Activated T-helper 2 cell treated with anti-CD3 and anti-CD28 coated beads, Interferon-gamma antibody, Interleukin-2, Interleukin-4, amounts not matched to agents 10 μg/mL and 5 μg/mL and 100 μg/mL, durations not matched to agents 14 hours and 24 hours and 36 hours (primary cell): ENCODE measurements at regions of chr13 and their contacts with region 1.

Region 1: DNA sequence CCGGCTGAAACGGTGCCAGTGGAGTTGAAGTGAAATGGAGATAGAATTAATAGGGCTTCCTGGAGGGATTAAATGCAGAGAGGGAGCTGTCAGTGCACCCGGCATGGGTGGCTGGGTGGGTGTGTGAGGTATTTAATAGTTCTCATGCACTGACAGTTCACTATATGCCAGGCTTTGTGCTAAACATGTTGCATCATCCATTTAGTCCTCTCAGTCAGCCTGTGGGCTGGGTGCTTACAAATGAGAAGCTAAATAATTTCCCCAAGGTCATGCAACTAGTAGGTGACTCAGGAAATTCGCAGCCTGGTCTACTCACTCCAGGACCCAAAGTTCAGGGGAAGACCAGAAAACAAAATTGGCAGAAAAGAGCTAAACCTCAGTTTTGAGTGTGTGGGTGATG is 63.5 kb upstream of the SPATA13 start:
- DNase-seq: no peak
- H3K4me3 Mint-ChIP-seq: peak overlapping the region; percentile 55
- H3K27ac Mint-ChIP-seq: peak overlapping the region; percentile 80
- H3K4me1 Mint-ChIP-seq: peaks cover 16% of the 10 kb centered on the region
- H3K27me3 Mint-ChIP-seq: peaks cover 27% of the 10 kb centered on the region

Region 2: DNA sequence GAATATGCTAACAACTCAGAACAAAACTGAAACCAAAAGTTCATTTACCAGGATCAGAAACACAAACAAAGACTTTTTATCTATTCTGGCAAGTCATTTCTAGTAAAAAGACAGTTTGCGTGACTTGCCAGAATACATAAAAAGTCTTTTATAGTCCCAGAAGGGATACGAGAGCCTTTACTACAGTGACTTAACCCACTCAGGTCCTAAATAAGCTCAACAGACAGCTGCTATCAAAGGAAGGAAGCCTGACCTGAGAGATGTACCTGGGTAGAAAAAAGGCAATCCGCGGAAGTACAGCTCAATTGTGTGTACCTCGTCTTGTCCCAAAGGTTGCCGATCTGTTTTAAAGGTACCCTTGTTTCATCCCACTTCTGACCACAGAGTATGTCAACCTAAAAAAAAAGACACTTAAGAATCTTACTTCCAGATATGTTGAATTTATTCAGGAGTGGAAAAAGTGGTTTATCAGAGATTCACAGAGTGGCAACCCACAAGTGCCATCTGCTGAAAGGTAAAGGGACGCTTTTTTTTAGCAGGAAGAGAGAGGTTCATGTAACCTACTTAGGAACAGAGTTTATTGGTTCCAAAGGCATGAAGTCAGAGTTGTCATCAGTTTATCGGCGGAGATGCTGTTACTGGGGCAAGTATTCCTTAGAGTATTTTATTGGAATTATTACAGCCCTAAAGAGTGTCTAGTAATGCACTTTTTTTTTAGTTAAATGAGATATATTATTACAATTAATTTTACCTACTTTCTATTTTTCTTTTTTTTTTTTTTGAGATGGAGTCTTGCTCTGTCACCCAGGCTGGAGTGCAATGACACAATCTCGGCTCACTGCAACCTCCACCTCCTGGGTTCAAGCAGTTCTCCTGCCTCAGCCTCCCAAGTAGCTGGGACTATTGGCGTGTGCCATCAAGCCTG is 130.1 kb before region 1 on chr13:
- intact Hi-C with region 1: loop called (anchors 5 kb)
- DNase-seq: peak; percentile 24
- H3K4me3 Mint-ChIP-seq: peak overlapping the region; percentile 73
- H3K27ac Mint-ChIP-seq: peak overlapping the region; percentile 87
- H3K4me1 Mint-ChIP-seq: peaks cover 31% of the 10 kb centered on the region
- H3K27me3 Mint-ChIP-seq: no peaks in the 10 kb centered on the region

Region 3: GRCh38 chr13:24127038-24127643 is 30.1 kb after region 1 on chr13:
- intact Hi-C with region 1: loop called (anchors 1 kb)
- DNase-seq: no peak
- H3K4me3 Mint-ChIP-seq: no peak overlapping the region
- H3K27ac Mint-ChIP-seq: no peak overlapping the region
- H3K4me1 Mint-ChIP-seq: peaks cover 46% of the 10 kb centered on the region
- H3K27me3 Mint-ChIP-seq: peaks cover 10% of the 10 kb centered on the region

Region 4: GRCh38 chr13:24168392-24168750 is 71.3 kb after region 1 on chr13:
- intact Hi-C with region 1: loop called (anchors 1 kb)
- DNase-seq: no peak
- H3K4me3 Mint-ChIP-seq: no peak overlapping the region
- H3K27ac Mint-ChIP-seq: peak overlapping the region; percentile 12
- H3K4me1 Mint-ChIP-seq: peaks cover 22% of the 10 kb centered on the region
- H3K27me3 Mint-ChIP-seq: no peaks in the 10 kb centered on the region

Region 5: GRCh38 chr13:24233351-24233901 is 136.4 kb after region 1 on chr13:
- intact Hi-C with region 1: loop called (anchors 2 kb)
- DNase-seq: no peak
- H3K4me3 Mint-ChIP-seq: no peak overlapping the region
- H3K27ac Mint-ChIP-seq: peak overlapping the region; percentile 81
- H3K4me1 Mint-ChIP-seq: peaks cover 47% of the 10 kb centered on the region
- H3K27me3 Mint-ChIP-seq: no peaks in the 10 kb centered on the region